Lower leg skin (tissue), 4 donors: ENCODE measurements at regions of chr5 and their contacts with region 1.

Region 1: DNA sequence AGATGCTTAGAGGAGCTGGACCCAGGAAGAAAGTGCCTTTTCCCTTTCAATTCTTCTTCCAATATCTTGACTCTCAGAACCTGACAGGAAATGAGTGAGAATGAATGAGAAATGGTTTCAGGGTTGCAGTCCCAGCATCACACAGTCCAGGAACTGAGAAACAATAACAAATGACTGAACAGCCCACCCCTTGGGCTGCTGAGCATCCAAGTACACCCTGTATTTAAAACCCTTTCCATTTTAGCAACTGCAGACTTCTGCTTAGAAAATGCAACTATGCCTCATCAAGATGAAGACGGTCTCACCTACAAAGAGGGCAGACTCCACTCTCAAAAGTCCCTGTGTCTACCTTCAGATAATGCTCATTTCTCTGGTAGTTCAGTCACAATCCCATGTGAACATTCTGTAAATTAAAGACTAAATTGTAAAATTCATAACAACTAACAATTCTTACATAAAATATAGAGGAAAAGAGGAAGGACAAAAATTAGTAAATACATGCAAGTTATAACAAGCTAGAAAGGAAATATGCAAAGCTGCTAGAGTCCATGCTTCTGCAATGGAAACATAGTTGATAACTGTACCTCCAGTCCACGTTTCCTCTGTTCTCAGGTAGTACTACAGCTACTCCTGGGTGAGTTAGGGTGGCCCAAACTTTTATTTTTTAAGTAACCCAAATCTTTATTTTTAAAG is 316.5 kb downstream of the ICE1 start:
- DNase-seq: no peak
- H3K4me3 ChIP-seq: no peak overlapping the region
- CTCF ChIP-seq: no peak
- POLR2A ChIP-seq: no peak

Region 2: DNA sequence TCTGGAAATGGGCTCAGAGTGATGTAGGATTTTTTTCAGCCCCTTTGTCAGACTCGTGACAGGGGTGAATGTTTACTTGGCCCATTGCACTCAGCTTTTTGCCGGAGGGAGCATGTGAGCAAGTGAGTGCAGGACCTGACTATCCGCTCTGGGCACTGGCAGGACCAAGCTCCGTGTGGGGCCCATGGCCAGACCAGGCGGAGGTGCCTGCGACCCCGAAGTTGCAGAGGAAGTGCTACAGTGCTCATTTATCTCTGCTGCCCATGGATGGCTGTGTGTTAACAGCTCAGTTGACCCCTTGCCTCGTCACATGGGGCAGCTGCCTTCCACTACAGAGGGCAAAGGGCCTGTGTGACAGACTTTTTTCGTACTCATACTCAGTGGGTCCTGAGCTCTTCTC is 1399.0 kb before region 1 on chr5:
- intact Hi-C with region 1: loop called (anchors 5 kb)
- DNase-seq: no peak
- H3K4me3 ChIP-seq: no peak overlapping the region
- CTCF ChIP-seq: no peak
- POLR2A ChIP-seq: no peak

Region 3: GRCh38 chr5:5658226-5658625 is 80.7 kb before region 1 on chr5:
- intact Hi-C with region 1: no loop called
- DNase-seq: peak in 1 of 2 donors; percentile 52
- H3K4me3 ChIP-seq: no peak overlapping the region
- CTCF ChIP-seq: no peak
- POLR2A ChIP-seq: no peak

Region 4: GRCh38 chr5:5886812-5887486 is 148.0 kb after region 1 on chr5:
- intact Hi-C with region 1: no loop called
- DNase-seq: no peak
- H3K4me3 ChIP-seq: no peak overlapping the region
- CTCF ChIP-seq: no peak
- POLR2A ChIP-seq: no peak